ENCODE measurements at regions of chr10 and their contacts with region 1.

Region 1: DNA sequence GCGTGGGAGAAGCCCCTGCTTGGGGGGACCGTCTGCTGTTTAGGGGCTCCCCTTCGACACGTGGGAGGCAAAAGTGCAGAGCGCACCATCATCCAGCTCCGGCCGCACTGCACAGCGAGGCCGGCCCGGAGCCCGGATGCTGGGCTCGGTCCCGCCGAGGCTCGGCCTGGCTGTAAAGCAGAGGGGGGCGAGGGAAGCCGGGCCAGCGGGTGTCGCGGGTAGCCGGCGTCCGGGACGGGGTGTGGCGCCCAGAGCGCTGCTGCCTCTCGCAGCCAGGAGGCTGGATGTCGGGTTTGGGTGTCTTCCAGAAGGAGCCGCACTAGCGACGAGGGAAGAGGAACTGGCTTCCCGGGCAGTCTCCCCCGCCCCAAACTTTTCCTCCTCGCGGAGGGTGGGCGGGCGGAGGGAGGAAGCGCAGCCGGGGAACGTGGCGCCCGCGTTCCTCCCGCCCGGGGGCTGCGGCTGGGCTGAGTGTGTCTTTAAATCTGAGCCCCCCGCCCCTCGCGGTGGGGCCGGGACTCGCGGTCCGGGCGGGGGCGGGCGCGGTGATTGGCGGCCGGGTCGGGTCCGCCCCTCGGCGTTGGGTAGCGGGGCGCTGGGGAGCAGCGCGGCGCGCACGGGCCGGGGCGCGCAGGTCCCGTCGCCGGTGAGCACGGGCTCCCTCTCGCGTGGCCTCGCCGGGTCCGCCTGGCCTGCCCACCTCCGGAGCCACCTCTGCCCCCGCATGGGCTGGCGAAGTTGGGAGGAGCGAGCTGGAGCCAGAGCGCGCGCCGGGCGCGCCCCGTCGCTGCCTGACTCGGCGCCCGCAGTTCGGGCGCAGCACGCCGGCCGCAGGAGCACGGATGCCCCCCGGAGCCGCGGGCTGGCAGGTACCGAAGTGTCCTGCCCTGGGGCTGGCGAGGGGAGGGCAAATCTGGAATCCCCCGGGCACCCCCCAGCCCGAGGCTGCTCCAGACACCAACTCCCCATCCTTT is at the start of gene PALD1:
- DNase-seq: no peak
- H3K4me3 Mint-ChIP-seq: peak within 1 kb of the TSS; percentile 78
- H3K27ac Mint-ChIP-seq: peak within 1 kb of the TSS; percentile 85
- H3K4me1 Mint-ChIP-seq: peaks cover 49% of the 10 kb centered on the region
- H3K27me3 Mint-ChIP-seq: peaks cover 59% of the 10 kb centered on the region
- total RNA-seq, gene PALD1: 0.83 and 0.88 TPM in 2 replicates

Region 2: DNA sequence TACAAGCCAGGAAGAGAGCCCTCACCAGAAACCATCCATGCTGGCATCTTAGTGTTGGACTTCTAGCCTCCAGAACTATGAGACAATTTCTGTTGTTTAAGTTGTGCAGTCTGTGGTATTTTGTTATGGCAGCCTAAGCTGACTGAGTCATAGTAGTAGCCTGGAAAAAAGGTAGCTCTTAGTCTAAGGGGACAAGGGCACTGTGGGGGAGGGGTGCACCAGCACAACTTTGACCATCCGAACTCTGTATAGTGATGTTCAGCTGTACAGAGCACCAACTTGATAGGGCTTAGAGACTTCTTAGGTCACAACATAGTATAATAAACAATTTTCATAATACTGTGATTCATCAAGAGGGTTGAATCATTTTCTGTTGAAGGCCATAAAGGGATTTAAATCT is 60.2 kb before region 1 on chr10:
- intact Hi-C with region 1: no loop called
- DNase-seq: no peak
- H3K4me3 Mint-ChIP-seq: no peak overlapping the region
- H3K27ac Mint-ChIP-seq: no peak overlapping the region
- H3K4me1 Mint-ChIP-seq: peaks cover 30% of the 10 kb centered on the region
- H3K27me3 Mint-ChIP-seq: no peaks in the 10 kb centered on the region

Region 3: DNA sequence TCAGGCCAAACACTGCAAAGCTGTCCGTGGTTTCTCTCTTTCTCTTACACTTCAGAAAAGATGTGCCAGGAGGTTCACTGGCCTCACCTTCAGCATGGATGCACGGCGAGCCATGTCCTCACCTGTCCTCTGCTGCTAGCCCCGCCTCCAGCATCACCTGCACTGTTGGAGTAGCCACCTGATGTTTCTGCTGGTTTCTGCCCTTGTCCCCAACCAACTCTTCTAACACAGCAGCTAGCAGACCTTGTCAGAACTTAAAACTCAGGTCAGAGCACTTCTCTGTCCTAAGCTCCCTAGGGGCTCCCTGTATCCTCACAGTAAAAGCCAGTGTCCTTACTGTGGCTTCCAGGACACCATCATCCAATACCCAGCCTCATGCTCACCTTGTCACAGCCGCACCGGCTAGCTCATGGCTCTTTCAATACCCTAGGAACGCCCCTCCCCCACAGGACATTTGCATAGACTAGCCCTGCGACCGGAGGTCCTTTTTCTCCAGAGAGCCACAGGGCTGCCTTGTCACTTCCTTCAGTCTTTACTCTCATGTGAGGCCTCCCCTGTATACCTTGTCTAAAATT is 15.3 kb after region 1 on chr10:
- intact Hi-C with region 1: loop called (anchors 1 kb)
- DNase-seq: no peak
- H3K4me3 Mint-ChIP-seq: no peak overlapping the region
- H3K27ac Mint-ChIP-seq: no peak overlapping the region
- H3K4me1 Mint-ChIP-seq: peaks cover 17% of the 10 kb centered on the region
- H3K27me3 Mint-ChIP-seq: peaks cover 24% of the 10 kb centered on the region

Measured in activated T-helper 1 cell treated with anti-CD3 and anti-CD28 coated beads, Interleukin-12 subunit alpha, Interleukin-12 subunit beta, Interleukin-2, Interleukin-4 antibody, amounts not matched to agents 30 ng/mL and 10 ng/mL and 1 ng/mL, durations not matched to agents 14 hours and 24 hours and 36 hours (primary cell).